Transverse colon (tissue), 4 donors: ENCODE measurements at regions of chr7 and their contacts with region 1.

Region 1: DNA sequence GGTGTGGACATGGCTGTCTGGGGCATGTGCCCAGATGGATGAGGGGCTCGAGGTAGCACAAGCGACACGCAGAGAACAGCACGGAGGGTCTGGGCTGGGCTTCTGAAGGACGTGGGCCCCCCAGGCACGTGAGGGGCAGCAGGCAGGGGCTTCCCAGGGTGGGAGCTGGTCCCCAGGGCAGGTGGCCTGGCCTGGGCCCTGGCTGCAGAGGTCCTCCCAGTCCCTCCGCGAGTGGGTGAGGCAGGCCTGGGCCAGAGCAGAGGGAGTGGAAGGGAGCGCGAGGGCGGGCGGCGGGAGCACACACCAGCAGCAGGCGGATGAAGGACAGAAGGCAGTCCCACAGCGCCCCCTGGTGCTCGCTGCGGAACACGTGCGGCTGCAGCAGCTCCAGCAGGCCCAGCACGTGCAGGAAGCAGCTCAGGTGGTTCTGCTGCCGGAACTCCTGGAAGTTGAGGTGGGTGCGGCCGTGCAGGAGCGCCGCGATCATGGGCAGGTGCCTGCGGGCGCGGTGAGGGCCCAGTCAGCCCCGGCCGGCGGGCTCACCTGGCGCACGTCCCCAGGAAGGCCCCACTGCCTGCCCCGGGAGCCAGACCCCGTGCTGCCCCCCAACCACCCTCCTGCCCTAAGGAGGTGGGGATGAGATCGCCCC is 14.7 kb upstream of the MICALL2 start:
- DNase-seq: peak; percentile 95
- H3K4me3 ChIP-seq: no peak overlapping the region
- H3K27ac ChIP-seq: peak overlapping the region in 3 of 4 donors; percentile 17 to 19 (median 17)
- H3K4me1 ChIP-seq: peaks cover 3 to 11% (median 4%) of the 10 kb centered on the region in 4 donors
- H3K27me3 ChIP-seq: no peaks in the 10 kb centered on the region
- CTCF ChIP-seq: peak; percentile 89 to 98 (median 95)
- EP300 ChIP-seq: no peak
- POLR2A ChIP-seq: no peak

Region 2: GRCh38 chr7:1219498-1219897 is 254.5 kb before region 1 on chr7:
- in situ Hi-C with region 1: no loop called
- intact Hi-C with region 1: loop called (anchors 5 kb)
- DNase-seq: no peak
- H3K4me3 ChIP-seq: no peak overlapping the region
- H3K27ac ChIP-seq: no peak overlapping the region
- H3K4me1 ChIP-seq: peaks cover 0 to 5% (median 4%) of the 10 kb centered on the region in 4 donors
- H3K27me3 ChIP-seq: peaks cover 89% of the 10 kb centered on the region
- CTCF ChIP-seq: no peak
- EP300 ChIP-seq: no peak
- POLR2A ChIP-seq: no peak

Region 3: DNA sequence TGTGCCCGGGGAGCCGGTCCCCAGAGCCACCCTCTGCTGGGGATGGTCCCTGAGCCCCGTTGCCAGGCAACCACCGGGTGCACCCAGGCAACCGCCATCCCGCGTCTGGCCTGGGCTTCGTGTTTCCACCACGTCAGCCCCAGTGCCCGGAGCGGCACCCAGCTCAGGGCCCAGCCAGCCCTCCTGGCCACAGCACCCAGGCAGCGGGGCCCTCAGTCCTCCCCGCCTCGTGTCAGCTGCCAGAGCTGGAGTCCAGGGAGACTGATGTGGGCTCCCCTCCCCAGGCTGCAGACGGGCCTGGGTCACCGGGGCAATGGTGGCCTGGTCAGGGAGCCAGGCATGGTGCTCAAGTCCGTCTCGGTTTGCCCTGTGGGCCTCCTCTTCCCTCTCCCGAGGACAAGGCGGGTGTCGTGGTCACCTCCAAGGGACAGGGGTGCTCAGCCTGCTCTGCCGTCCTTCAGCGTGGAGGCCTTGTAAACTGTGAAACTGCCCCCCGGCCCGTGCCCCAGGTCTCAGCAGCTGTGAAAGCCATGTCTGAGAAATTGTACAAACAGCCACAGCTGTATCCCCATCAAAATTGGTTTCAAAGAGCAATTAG is 87.3 kb before region 1 on chr7:
- in situ Hi-C with region 1: no loop called
- intact Hi-C with region 1: no loop called
- DNase-seq: no peak
- H3K4me3 ChIP-seq: no peak overlapping the region
- H3K27ac ChIP-seq: no peak overlapping the region
- H3K4me1 ChIP-seq: no peaks in the 10 kb centered on the region
- H3K27me3 ChIP-seq: peaks cover 61% of the 10 kb centered on the region
- CTCF ChIP-seq: no peak
- EP300 ChIP-seq: no peak
- POLR2A ChIP-seq: no peak

Region 4: DNA sequence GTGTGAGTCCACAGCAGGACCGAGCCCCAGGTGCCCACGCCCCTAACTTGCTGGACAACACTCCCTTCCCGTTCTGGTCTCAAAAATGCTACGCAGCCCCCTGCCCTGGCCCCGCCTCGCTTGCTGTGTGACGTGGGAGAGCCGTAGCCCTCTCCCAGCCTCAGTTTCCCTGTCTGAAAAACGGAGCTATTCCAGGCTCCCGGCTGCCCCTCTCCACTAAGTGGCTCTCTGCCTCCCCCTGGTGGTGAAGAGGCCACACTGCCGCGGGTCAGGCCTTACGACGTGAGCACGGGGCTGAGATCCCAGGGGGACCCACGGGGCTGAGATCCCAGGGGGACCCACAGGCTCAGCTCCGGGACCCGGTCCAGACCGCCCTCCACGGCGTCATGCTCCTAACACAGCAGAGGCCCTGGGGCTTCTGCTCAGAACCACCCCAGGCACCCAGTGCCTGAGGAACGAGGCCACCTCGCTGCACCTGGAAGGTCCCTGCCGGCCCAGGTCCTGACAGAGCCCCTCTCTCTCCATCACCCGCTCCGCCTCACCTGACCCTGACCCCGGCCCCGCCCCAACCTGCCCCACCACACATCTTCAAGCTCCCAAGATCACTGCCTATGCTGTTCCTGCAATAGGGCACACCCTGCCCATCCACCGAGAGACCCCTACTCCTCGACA is 41.4 kb before region 1 on chr7:
- in situ Hi-C with region 1: no loop called
- intact Hi-C with region 1: loop called (anchors 5 kb)
- DNase-seq: peak; percentile 76
- H3K4me3 ChIP-seq: no peak overlapping the region
- H3K27ac ChIP-seq: no peak overlapping the region
- H3K4me1 ChIP-seq: peaks cover 0 to 6% (median 0%) of the 10 kb centered on the region in 4 donors
- H3K27me3 ChIP-seq: peaks cover 36% of the 10 kb centered on the region
- CTCF ChIP-seq: peak; percentile 92 to 99 (median 98)
- EP300 ChIP-seq: no peak
- POLR2A ChIP-seq: no peak

Region 5: DNA sequence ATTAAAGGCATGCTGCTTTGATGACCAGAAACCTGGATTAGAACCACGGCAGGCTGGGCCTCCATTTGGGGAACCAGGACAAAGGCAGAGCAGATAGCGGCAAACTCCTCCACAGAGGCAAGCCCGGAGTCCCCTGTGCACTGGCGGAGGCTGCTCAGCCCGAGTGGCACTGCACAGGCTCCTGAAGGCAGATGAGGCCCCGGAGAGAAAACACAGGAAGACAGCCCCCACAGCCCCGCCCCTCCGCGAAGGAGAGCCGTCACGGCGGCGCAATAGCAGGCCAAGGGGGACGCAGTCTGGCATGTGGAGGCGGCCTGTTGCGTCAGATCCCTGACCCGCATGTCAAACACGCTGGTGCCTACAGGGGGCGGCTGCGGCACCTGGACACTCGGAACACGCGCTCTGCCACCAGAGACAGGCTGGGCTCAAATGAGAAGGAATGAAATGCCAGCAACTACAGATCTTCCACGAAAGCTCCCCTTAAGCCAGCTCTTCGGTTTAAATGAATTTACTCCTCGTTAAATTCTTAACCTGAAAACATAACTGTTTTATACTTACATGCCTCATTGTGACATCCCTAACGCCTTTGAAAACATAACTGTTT is 630.2 kb after region 1 on chr7:
- in situ Hi-C with region 1: no loop called
- intact Hi-C with region 1: no loop called
- DNase-seq: peak; percentile 75
- H3K4me3 ChIP-seq: peak overlapping the region in 1 of 4 donors; percentile 2
- H3K27ac ChIP-seq: peak overlapping the region in 3 of 4 donors; percentile 4 to 82 (median 55)
- H3K4me1 ChIP-seq: peaks cover 7 to 18% (median 14%) of the 10 kb centered on the region in 4 donors
- H3K27me3 ChIP-seq: no peaks in the 10 kb centered on the region
- CTCF ChIP-seq: peak; percentile 41 to 58 (median 45)
- EP300 ChIP-seq: no peak
- POLR2A ChIP-seq: no peak